CD14-positive monocyte (primary cell): ENCODE measurements at regions of chrX and their contacts with region 1.

Region 1: DNA sequence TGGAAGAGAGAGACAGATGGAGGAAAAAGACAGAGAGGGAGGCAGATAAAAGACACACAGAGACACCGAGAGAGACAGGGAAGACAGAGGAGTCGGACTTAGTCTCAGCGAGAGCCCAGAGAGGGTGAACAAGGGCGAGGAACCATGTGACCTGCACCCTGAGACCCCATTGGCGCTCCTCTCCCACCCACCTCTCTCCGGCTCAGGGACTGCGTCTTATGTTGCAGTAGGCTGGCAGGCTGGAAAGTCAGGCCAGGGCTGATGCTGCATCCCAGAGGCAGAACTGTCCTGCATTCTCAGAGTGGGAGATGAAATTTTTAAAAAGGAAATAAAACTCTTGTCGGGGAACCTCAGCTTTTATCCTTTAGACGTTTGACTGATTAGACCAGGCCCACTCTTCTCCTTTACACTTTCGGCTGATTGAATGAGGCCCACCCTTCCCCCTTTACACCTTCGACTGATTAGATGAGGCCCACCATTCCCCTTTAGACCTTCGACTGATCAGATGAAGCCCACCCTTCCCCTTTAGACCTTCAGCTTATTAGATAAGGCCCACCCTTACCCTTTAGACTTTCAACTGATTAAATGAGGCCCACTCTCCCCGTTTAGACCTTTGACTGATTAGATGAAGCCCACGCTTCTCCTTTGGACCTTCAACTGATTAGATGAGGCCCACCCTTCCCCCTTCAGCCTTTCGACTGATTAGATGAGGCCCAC is 29.5 kb upstream of the IL3RA start:
- DNase-seq: no peak
- H3K4me3 ChIP-seq: no peak overlapping the region
- H3K4me3 Mint-ChIP-seq: no peak overlapping the region
- H3K27ac ChIP-seq: peak overlapping the region in 1 of 2 donors; percentile 27
- H3K27ac Mint-ChIP-seq: peak overlapping the region; percentile 5 to 90 (median 76)
- H3K4me1 ChIP-seq: no peaks in the 10 kb centered on the region
- H3K4me1 Mint-ChIP-seq: no peaks in the 10 kb centered on the region
- H3K27me3 ChIP-seq: no peaks in the 10 kb centered on the region
- H3K27me3 Mint-ChIP-seq: peaks cover 0 to 5% (median 0%) of the 10 kb centered on the region in 3 donors
- CTCF ChIP-seq: no peak

Region 2: DNA sequence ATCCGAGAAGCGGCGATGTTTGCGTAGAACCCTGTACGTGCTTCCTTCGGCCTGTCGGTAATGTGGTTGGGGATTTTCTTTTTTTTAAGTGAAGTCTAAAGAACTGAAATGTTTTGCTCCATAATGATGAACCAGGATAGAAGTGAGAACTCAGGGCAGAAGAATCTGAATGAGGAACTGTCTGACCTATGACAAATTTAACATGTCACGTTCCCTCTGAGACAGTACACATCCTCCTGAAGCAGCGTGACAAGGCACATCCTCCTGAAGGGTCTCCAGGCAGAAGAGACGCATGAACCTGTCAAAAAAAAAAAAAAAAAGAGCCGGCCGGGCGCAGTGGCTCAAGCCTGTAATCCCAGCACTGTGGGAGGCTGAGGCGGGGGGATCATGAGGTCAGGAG is 32.3 kb before region 1 on chrX:
- intact Hi-C with region 1: loop called in 1 of 2 experiments (anchors 5 kb)
- DNase-seq: peak; percentile 84 to 94 (median 93)
- H3K4me3 ChIP-seq: peak overlapping the region in 1 of 3 experiments; percentile 64
- H3K4me3 Mint-ChIP-seq: peak overlapping the region; percentile 51 to 73
- H3K27ac ChIP-seq: peak overlapping the region; percentile 78
- H3K27ac Mint-ChIP-seq: peak overlapping the region; percentile 92 to 98 (median 97)
- H3K4me1 ChIP-seq: peaks cover 69 to 73% of the 10 kb centered on the region in 2 donors
- H3K4me1 Mint-ChIP-seq: peaks cover 56% of the 10 kb centered on the region
- H3K27me3 ChIP-seq: no peaks in the 10 kb centered on the region
- H3K27me3 Mint-ChIP-seq: no peaks in the 10 kb centered on the region
- CTCF ChIP-seq: no peak